Left cardiac atrium (tissue), 4 donors: ENCODE measurements at regions of chr3 and their contacts with region 1.

Region 1: DNA sequence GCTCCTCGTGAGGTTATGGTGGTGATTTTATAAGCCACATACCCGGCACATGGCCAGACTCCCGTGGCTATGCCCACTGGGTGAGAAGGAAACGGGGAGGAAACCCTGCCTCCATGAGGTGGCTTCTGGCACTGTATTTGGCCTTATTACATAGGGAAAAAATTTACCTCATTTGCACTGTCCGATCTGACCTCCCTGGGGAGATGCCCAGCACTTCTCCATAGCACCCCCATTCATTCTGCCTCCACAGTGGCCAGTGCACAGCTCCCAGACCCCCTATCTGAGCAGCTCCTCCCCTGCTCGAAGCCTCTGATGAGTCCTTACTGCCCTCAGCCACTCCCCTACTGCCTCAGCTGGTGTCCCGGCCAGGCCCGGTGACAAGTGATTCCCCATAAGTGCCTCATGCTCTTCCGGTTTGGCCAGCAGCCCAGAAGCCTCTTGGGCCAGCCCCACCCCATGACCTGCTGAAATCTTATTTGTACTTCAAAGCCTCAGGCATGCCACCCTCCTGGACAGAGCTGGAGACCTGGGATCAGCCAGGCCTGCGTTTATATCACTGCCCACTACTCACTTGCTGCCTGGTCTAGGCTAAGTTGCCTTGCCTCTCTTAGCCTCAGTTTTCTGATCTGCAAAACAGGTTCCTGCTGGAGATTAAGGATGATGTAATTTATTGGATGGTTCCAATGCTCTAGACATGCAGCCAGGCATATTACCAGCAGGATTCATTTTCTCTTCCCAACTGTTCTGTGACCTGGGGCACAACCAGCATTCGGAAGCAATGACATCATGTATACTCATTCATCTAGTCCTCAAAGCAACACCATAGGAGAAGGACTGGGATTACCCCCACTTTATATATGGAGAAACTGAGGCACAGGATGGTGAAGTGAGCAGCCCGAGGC is 30.6 kb upstream of the SLC6A6 start:
- DNase-seq: peak; percentile 85
- ATAC-seq: peak; percentile 71

Region 2: DNA sequence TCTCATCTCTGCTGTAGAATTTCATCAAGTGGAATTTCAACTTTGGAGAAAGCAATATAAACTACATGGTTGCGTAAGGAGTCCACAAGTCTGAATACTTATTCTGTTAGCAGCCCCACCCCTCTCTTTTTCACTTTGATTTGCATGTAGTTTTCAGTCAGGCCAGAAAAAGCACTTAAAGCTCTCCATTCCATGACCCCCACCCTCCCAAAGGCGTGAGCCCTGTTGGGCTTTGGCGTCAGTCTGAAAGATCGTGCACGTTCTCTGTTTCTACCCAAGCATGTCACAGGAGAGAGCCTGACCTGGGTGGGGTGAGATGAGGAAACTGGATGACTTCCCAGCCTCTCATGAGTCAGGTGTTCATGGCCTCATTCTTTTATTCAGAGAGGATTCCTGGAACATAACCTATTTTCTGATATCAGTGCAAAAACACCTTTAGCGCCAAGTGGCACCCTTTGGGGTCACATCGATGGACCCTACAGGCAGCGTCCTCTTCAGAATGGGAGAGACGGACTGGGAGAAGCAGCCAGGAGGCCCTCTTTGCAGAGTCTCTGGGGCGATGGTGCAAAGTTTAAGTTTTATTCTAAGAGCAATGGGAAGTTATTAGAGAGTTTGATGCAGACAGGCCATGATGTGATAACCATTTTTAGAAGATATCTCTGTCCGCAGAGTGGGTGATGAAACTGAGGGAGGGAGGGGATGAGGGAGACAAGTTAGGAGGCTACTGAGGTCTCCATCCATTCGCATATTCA is 137.4 kb before region 1 on chr3:
- intact Hi-C with region 1: loop called in 1 of 2 experiments (anchors 5 kb)
- DNase-seq: peak; percentile 72
- ATAC-seq: peak; percentile 38 to 78